ENCODE measurements at regions of chr11 and their contacts with region 1.

Region 1: DNA sequence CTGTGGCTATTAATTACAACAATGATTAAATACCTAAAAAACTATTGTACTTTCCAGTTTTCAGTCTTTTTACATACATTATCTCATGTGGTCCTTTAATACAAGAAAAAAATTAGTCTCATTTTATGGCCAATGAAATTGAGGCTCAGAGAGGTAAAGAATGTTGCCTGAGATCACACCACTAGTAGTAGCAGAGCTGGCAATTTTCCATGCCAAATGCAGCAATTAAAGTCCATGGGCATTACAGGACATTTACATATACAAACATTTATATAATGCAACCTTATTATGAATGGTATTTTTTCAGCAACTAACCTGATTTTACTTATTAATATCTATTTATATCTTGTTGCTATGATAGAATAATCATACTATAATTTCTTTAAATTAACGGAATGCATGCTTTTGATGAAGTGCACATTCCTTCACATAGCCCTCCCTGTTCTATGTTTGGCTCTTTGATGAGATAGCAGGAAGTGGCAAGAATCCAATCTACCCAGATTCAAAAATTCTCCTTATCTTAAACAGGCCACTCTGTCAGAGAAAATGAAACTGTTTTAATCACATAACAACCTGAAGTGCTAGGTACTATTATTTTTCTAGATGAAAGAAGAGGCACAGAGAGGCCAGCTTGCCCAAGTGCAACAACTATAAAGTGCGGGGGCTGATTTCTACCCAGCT is 120.9 kb upstream of the LDLRAD3 start:
- DNase-seq: no peak
- ATAC-seq: no peak
- H3K4me3 Mint-ChIP-seq: no peak overlapping the region
- H3K27ac Mint-ChIP-seq: no peak overlapping the region
- H3K4me1 Mint-ChIP-seq: peaks cover 11% of the 10 kb centered on the region
- H3K27me3 Mint-ChIP-seq: no peaks in the 10 kb centered on the region
- CTCF ChIP-seq: no peak

Region 2: DNA sequence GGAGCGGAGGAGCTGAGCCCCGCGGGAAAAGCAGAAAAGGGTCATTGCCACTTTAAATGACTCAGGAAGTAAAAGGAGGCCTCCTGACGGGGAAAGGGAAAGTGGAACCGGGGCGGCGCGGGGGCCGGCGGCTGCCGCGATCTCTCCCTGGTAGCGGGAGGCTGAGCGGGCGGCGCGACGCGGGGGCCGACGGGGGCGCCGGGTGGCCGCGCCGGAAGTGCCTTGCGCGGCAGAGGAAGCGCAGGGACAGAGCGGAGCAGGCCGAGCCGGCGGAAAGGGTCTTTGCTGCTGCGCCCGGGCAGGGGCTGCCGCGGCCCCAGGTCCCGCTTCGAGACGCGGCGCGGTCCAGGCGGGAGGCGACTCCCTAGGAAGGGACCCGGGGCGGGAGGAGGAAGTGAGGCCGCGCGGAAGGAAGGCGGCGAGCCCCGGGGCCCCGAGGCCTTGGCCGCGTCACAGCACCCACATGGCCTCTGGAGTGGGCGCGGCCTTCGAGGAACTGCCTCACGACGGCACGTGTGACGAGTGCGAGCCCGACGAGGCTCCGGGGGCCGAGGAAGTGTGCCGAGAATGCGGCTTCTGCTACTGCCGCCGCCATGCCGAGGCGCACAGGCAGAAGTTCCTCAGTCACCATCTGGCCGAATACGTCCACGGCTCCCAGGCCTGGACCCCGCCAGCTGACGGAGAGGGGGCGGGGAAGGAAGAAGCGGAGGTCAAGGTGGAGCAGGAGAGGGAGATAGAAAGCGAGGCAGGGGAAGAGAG is 160.1 kb before region 1 on chr11 and contains the start of gene TRIM44:
- CTCF ChIA-PET with region 1: interaction called, 3 read pairs
- POLR2A ChIA-PET with region 1: no interaction called
- intact Hi-C with region 1: loop called (anchors 2 kb)
- DNase-seq: peak; percentile 77
- ATAC-seq: peak; percentile 82
- H3K4me3 Mint-ChIP-seq: peak within 1 kb of the TSS; percentile 98
- H3K27ac Mint-ChIP-seq: peak within 1 kb of the TSS; percentile 98
- H3K4me1 Mint-ChIP-seq: peaks cover 50% of the 10 kb centered on the region
- H3K27me3 Mint-ChIP-seq: peaks cover 3% of the 10 kb centered on the region
- CTCF ChIP-seq: no peak
- total RNA-seq, gene TRIM44: 66.7 and 67.0 TPM in 2 replicates

Region 3: DNA sequence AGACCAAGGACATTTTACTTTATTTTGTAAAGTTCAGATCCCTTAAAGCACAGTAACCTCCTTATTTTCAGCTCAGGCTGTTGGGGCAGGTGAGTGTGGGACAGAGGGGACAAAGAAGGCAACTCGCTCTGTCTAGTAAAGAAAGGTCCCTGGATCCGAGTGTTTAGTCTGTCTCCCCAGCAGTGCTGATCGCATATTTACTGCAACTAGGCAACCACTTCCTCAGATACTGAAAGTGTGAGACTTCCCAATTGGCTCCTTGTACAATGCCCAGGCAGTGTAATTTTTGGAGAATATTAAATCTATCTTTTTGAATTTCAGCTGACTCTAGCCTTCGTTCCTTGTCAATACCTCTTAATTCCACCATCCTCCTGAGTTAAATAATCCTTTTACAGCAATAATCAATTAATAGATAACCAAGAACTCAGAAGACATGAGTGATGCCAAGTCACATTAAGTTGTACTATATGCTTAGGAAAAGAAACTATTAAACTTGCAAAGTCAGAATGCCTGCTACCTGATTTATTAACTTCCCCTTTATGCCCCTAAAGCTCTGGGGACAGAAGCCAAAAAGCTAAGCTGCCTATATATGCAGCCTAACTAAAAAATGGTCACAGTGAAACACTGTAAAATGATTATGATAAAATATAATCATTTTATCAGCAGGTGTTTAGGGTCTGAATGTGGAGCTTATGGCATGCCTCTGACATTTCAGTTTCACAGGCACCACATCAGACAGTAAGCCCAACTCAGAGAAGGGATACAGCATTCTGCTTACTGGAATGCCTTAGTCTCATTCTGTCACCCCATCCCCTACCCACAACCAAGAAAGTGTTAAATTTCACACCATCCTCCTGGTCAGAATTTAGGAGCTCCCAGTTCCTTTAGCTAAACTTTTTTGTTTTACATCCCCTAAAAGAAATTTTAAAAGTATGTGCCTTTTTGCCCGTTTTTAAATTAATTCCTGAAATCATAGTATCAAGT is 21.7 kb before region 1 on chr11:
- CTCF ChIA-PET with region 1: interaction called, 15 read pairs
- POLR2A ChIA-PET with region 1: no interaction called
- intact Hi-C with region 1: no loop called
- DNase-seq: no peak
- ATAC-seq: peak; percentile 45
- H3K4me3 Mint-ChIP-seq: no peak overlapping the region
- H3K27ac Mint-ChIP-seq: peak overlapping the region; percentile 46
- H3K4me1 Mint-ChIP-seq: peaks cover 15% of the 10 kb centered on the region
- H3K27me3 Mint-ChIP-seq: no peaks in the 10 kb centered on the region
- CTCF ChIP-seq: no peak

Region 4: DNA sequence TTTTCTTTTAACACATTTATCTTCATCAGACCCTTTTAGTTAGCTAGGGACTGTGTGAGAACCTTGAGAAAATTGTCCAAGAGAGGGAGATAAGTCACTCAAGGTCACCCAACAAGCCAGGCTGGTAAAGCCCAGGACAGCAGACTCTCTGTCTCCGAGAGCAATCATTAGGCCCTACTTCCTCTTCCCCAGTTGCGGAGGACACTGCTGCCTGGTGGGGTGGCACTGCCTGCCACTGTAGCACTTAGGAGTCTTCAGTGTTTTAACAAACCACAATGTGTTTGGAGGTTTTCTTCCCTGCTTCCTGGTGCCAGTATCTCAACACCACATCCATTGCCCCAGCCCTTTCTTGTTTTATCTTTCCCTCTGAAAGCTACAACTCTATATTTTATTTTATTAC is 11.2 kb before region 1 on chr11:
- CTCF ChIA-PET with region 1: interaction called, 22 read pairs
- POLR2A ChIA-PET with region 1: no interaction called
- intact Hi-C with region 1: no loop called
- DNase-seq: no peak
- ATAC-seq: no peak
- H3K4me3 Mint-ChIP-seq: no peak overlapping the region
- H3K27ac Mint-ChIP-seq: no peak overlapping the region
- H3K4me1 Mint-ChIP-seq: no peaks in the 10 kb centered on the region
- H3K27me3 Mint-ChIP-seq: no peaks in the 10 kb centered on the region
- CTCF ChIP-seq: no peak

Region 5: DNA sequence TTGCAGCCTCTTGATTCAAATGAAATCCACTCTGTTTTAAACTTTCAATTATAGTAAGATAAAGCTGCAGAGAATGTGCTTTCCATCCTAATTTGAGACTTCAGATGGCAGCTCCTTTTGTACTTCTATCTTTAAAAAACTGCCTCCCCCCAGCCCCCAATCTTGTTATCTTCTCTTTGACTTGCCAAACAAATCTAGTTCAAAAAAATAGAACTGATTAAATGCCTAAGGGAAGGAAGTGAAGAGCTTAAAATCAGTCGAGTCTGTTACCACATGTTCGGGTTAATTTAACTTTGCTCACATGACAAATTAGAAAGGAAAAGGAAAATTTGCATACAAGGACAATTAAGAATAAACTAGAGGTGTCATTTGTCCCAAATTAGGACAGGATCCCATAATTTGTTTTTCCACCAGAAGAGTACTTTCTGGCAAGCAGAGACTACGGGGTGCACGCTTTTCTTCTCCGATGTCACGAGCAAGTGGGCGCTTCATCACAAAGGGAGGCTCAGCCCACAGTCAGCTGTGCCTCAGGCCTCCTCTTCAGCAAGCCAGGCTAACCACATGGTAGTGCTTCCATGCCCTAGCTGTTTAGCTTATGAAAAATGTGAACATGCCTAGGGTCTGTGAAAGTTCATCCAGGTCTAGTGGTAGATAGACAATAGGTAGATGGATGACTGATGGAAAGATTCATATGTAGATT is 51.9 kb after region 1 on chr11:
- CTCF ChIA-PET with region 1: no interaction called
- POLR2A ChIA-PET with region 1: no interaction called
- intact Hi-C with region 1: no loop called
- DNase-seq: no peak
- ATAC-seq: no peak
- H3K4me3 Mint-ChIP-seq: no peak overlapping the region
- H3K27ac Mint-ChIP-seq: no peak overlapping the region
- H3K4me1 Mint-ChIP-seq: no peaks in the 10 kb centered on the region
- H3K27me3 Mint-ChIP-seq: peaks cover 9% of the 10 kb centered on the region
- CTCF ChIP-seq: no peak

Region 6: GRCh38 chr11:36034551-36035331 is 211.8 kb after region 1 on chr11:
- CTCF ChIA-PET with region 1: no interaction called
- POLR2A ChIA-PET with region 1: no interaction called
- intact Hi-C with region 1: no loop called
- DNase-seq: no peak
- ATAC-seq: no peak
- H3K4me3 Mint-ChIP-seq: no peak overlapping the region
- H3K27ac Mint-ChIP-seq: no peak overlapping the region
- H3K4me1 Mint-ChIP-seq: no peaks in the 10 kb centered on the region
- H3K27me3 Mint-ChIP-seq: no peaks in the 10 kb centered on the region
- CTCF ChIP-seq: no peak

Region 7: GRCh38 chr11:36131721-36132397 is 308.9 kb after region 1 on chr11:
- CTCF ChIA-PET with region 1: no interaction called
- POLR2A ChIA-PET with region 1: no interaction called
- intact Hi-C with region 1: loop called (anchors 5 kb)
- DNase-seq: no peak
- ATAC-seq: no peak
- H3K4me3 Mint-ChIP-seq: no peak overlapping the region
- H3K27ac Mint-ChIP-seq: no peak overlapping the region
- H3K4me1 Mint-ChIP-seq: no peaks in the 10 kb centered on the region
- H3K27me3 Mint-ChIP-seq: peaks cover 18% of the 10 kb centered on the region
- CTCF ChIP-seq: no peak

Region 8: DNA sequence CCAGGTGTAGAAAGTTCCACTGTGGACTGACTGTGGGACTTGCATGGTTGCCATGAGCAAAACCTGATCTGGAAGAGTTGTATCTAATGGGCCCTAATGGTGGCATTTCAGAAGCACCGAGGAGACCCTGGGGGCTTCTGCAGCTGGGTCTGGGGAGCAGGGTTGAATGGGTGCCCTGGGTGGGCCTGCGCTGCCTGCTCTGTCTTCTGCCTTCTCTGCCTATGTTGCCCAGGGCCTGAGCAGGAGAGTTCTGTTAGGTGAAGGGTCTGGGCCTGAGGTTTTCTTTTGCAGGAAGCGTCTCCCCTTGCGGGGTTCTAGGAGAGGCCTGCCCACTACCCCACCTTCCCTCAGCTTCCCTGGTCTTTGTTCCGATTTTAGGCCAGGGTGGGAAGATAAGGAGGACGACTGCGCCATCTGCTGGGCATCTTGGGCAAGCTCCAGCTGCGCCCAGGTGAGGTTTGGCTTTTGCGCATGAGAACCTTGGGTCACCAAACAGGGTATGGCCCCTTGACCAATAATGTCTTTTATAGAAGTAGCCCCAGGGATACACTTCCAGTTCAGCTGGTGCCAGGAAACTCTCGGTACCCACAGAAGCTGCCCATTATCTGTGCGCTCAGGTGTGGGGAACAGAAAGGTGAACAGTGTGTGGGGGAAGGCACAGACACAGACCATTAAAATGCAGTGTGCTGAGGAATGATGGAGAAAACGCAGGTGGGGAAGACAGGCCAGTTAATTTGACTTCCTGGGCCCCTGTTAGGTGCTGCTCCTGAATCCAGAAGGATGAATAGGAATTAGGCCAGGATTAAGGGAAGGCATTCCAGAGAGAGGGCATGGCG is 443.1 kb after region 1 on chr11:
- CTCF ChIA-PET with region 1: interaction called, 19 read pairs
- POLR2A ChIA-PET with region 1: no interaction called
- intact Hi-C with region 1: loop called (anchors 5 kb)
- DNase-seq: peak; percentile 52
- ATAC-seq: peak; percentile 72
- H3K4me3 Mint-ChIP-seq: no peak overlapping the region
- H3K27ac Mint-ChIP-seq: no peak overlapping the region
- H3K4me1 Mint-ChIP-seq: no peaks in the 10 kb centered on the region
- H3K27me3 Mint-ChIP-seq: peaks cover 10% of the 10 kb centered on the region
- CTCF ChIP-seq: no peak

Region 9: GRCh38 chr11:36478700-36479329 is 655.9 kb after region 1 on chr11:
- CTCF ChIA-PET with region 1: interaction called, 10 read pairs
- POLR2A ChIA-PET with region 1: no interaction called
- intact Hi-C with region 1: loop called (anchors 5 kb)
- DNase-seq: no peak
- ATAC-seq: no peak
- H3K4me3 Mint-ChIP-seq: no peak overlapping the region
- H3K27ac Mint-ChIP-seq: no peak overlapping the region
- H3K4me1 Mint-ChIP-seq: no peaks in the 10 kb centered on the region
- H3K27me3 Mint-ChIP-seq: no peaks in the 10 kb centered on the region
- CTCF ChIP-seq: no peak

Measured in activated B cell treated with CpG ODN at 0.5 μM for 24 hours (primary cell).